Sigmoid colon (tissue), 7 donors: ENCODE measurements at regions of chr6 and their contacts with region 1.

Region 1: DNA sequence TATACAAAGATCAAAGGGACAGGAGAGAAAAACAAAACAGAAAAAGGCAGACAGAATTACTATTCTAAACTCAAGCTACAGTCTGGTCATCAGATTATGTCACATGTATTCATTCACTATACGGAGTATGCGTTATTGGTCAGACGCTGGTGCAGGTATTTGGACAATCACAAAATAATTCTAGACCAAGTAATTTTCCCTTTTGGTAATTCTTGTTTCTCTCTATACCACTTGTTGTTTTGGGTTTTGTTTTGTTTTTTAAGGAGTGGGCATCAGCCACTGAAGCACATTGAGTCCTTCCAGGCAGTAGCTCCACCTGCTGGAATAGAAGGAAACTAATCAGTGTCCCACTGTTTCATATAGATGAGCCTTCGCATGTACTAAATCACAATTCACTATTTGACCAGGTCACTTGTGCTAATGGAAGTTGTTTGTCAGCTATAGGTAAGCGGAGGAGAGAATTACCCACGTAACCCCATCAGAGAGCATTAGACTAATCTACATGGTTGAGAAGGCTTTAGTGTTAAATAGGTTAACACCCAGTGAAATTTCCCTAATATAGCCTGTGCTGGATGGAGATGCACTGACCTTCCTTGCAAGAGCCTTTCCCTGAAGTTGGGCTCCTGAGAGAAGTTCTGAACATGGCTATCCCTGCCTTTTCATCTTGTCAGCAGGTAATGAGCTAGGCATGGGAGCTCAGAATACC is 77.9 kb downstream of the TNFAIP3 start:
- DNase-seq: no peak
- H3K4me3 ChIP-seq: no peak overlapping the region
- H3K27ac ChIP-seq: no peak overlapping the region
- H3K4me1 ChIP-seq: peaks cover 0 to 12% (median 2%) of the 10 kb centered on the region in 4 donors
- H3K27me3 ChIP-seq: no peaks in the 10 kb centered on the region
- CTCF ChIP-seq: peak; percentile 51 to 77 (median 66)
- EP300 ChIP-seq: no peak
- POLR2A ChIP-seq: no peak

Region 2: DNA sequence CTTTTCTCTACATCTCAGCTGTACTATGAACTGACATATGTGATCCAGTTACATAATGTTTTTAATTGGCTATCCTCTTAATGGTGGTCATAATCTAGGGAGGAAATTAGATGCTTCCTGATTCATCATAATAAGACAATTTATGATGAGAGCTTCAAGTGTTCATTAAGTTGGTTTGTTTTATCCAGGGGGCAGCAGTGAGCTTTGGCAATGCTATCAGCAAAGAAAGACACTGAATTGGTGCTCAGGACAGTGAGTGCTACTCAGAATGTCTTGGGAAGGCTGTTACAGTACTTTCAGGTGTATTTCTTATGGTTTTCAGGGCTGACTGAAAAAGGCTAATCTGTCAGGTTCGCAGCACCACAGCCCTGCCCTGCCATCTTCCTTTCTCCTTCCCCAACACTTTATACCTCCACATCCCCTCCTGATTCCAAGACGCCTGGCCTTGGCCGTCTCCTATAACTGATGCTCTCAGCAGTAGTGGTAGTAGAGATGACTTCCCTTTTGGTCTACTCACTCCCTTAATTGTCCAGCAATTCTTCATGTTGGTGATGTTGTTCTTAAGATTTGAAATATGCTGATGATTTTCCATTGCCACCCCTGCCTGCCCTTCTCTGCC is 144.9 kb before region 1 on chr6:
- intact Hi-C with region 1: loop called (anchors 5 kb)
- DNase-seq: no peak
- H3K4me3 ChIP-seq: no peak overlapping the region
- H3K27ac ChIP-seq: peak overlapping the region in 1 of 4 donors; percentile 5
- H3K4me1 ChIP-seq: peaks cover 0 to 30% (median 16%) of the 10 kb centered on the region in 4 donors
- H3K27me3 ChIP-seq: no peaks in the 10 kb centered on the region
- CTCF ChIP-seq: peak; percentile 13 to 43 (median 31)
- EP300 ChIP-seq: no peak
- POLR2A ChIP-seq: no peak